Ascending aorta (tissue), 2 donors: ENCODE measurements at regions of chr13 and their contacts with region 1.

Region 1: GRCh38 chr13:29362849-29363604 is 232.5 kb downstream of the SLC7A1 start:
- DNase-seq: peak in 1 of 2 donors; percentile 74
- H3K4me3 ChIP-seq: peak overlapping the region; percentile 7 to 54
- H3K27ac ChIP-seq: peak overlapping the region in 1 of 2 donors; percentile 37
- H3K4me1 ChIP-seq: peaks cover 0 to 4% of the 10 kb centered on the region in 2 donors
- H3K27me3 ChIP-seq: no peaks in the 10 kb centered on the region
- CTCF ChIP-seq: peak; percentile 78 to 94 (median 93)

Region 2: DNA sequence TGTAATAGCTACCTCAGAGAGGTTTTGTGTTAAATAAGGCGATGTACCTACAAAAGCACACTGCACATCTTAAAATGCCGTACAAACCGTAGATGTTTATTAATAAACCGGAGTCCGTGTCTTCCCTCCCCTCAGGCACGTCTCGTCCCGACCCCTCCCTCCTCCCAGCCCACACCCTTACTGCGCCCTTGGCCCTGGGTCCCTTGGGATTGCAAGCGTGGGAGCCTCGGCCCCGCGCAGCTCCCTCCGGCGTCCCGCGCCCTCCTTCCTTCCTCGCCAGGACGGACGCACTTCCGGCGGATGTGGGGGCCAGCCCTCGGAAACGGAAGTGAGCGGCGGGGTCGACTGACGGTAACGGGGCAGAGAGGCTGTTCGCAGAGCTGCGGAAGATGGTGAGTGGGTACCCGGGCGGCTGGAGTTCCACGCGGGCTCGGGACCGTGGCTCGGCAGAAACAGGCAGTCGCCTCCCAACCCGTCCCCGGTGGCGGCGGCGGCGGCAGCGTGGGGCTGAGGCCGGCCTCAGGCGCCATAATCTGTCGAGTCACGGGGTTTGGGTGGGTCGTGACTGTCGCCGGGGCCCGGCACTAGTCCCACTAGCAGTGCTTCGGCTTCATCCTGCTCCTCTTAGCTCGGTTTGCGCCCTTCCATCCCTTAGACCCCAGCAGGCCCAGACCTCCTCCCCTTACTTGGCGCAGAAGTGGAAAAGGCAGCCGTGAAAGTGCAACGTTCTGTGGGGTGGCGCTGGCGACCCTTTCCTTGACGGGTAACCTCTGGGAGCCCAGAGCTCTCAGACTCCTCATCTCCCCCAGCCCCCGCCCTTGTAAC is 704.0 kb before region 1 on chr13 and contains the start of gene POMP:
- intact Hi-C with region 1: loop called (anchors 10 kb)
- DNase-seq: peak; percentile 72 to 96
- H3K4me3 ChIP-seq: peak within 1 kb of the TSS; percentile 91 to 98
- H3K27ac ChIP-seq: peak within 1 kb of the TSS; percentile 92 to 97
- H3K4me1 ChIP-seq: peaks cover 9 to 30% of the 10 kb centered on the region in 2 donors
- H3K27me3 ChIP-seq: no peaks in the 10 kb centered on the region
- CTCF ChIP-seq: no peak
- total RNA-seq, gene POMP: 25.0 TPM

Region 3: DNA sequence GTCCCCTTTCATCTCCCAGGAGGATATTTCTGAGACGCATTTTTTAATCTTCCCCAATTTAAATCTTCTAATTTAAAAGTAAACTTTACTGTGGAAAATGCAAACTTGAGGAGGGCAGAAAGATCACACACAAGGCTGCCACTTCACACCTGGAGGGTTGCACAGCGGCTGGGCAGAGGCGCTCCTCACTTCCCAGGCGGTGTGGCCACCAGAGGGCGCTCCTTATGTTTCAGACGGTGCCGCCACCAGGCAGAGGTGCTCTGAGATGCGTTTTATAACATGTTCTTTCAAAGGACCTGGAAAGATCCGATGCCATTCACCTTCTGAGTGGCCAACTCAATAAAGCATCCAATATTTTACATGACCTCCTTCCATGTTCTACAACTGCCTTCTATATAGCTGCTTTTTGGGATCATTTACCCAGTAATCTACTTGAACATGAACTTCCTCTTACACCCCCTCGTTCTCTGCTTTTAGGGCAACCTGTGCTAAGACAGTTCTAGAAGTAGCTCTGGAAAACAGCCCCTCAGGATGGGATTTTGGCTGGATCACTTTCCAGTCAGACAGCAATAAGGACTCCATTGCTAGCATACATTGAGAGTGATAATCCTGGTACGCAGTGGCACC is 557.7 kb before region 1 on chr13:
- intact Hi-C with region 1: loop called (anchors 1 kb)
- DNase-seq: no peak
- H3K4me3 ChIP-seq: no peak overlapping the region
- H3K27ac ChIP-seq: no peak overlapping the region
- H3K4me1 ChIP-seq: no peaks in the 10 kb centered on the region
- H3K27me3 ChIP-seq: no peaks in the 10 kb centered on the region
- CTCF ChIP-seq: peak; percentile 38 to 49 (median 41)

Region 4: GRCh38 chr13:29077051-29077813 is 285.8 kb before region 1 on chr13:
- intact Hi-C with region 1: loop called (anchors 10 kb)
- DNase-seq: no peak
- H3K4me3 ChIP-seq: no peak overlapping the region
- H3K27ac ChIP-seq: no peak overlapping the region
- H3K4me1 ChIP-seq: no peaks in the 10 kb centered on the region
- H3K27me3 ChIP-seq: no peaks in the 10 kb centered on the region
- CTCF ChIP-seq: no peak

Region 5: GRCh38 chr13:29140277-29140676 is 222.8 kb before region 1 on chr13:
- intact Hi-C with region 1: loop called (anchors 10 kb)
- DNase-seq: peak; percentile 25 to 92
- H3K4me3 ChIP-seq: peak overlapping the region; percentile 33 to 61
- H3K27ac ChIP-seq: peak overlapping the region; percentile 74 to 84
- H3K4me1 ChIP-seq: peaks cover 0 to 10% of the 10 kb centered on the region in 2 donors
- H3K27me3 ChIP-seq: no peaks in the 10 kb centered on the region
- CTCF ChIP-seq: no peak

Region 6: DNA sequence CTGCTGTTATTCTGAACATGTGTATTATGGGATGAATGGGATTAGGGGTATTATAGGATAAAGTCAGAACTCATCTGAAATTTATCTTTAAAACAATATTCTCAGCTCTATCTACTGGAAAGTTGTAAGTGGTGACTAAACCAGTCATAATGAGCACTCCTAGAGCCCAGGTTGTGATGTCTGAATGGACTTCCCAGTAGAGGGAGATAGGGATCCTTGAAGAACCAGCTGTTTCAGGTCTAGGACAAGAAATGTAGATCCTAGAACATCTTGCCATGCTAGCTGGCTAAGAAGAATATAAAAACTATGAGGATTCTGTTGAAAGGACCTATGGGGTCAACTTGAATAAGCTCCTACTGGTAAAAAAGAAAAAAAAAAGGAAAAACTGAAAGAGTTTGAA is 78.3 kb before region 1 on chr13:
- intact Hi-C with region 1: loop called (anchors 5 kb)
- DNase-seq: no peak
- H3K4me3 ChIP-seq: no peak overlapping the region
- H3K27ac ChIP-seq: no peak overlapping the region
- H3K4me1 ChIP-seq: no peaks in the 10 kb centered on the region
- H3K27me3 ChIP-seq: no peaks in the 10 kb centered on the region
- CTCF ChIP-seq: no peak

Region 7: GRCh38 chr13:30319655-30320054 is 956.6 kb after region 1 on chr13:
- intact Hi-C with region 1: no loop called
- DNase-seq: no peak
- H3K4me3 ChIP-seq: no peak overlapping the region
- H3K27ac ChIP-seq: no peak overlapping the region
- H3K4me1 ChIP-seq: no peaks in the 10 kb centered on the region
- H3K27me3 ChIP-seq: no peaks in the 10 kb centered on the region
- CTCF ChIP-seq: no peak